ENCODE measurements at regions of chr12 and their contacts with region 1.

Region 1: DNA sequence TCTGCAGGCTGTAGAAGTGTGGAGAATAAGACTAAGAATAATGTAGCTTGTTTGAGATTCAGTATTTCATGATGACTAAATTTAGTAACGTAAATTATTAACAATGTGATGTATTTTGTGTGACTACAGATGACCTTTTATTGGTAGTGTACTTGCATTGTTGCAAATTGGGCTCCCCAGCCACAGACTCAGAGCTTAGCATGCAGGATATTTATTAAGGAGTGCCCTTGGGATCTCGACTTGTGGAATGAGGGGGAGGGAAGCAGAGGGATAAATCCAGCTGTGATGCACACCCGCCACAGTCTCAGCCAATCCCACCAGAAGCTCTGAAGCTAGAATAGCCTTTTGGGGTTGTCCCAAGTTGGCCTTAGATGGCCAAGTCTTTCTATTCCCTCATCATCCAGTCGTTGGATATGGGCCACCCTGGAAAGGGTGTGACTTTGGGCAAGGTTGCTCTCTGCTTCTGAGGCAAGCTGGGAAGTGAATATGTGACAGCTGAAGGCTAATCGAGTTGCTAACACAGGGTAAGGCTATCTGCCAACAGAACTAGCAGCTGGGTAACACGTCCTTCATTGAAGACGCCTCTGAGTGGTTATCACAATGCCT is 42.1 kb upstream of the USP44 start:
- DNase-seq: no peak
- H3K4me3 ChIP-seq: no peak overlapping the region
- H3K4me3 Mint-ChIP-seq: no peak overlapping the region
- H3K27ac Mint-ChIP-seq: no peak overlapping the region
- H3K4me1 ChIP-seq: no peaks in the 10 kb centered on the region
- H3K4me1 Mint-ChIP-seq: no peaks in the 10 kb centered on the region
- H3K27me3 ChIP-seq: no peaks in the 10 kb centered on the region
- H3K27me3 Mint-ChIP-seq: no peaks in the 10 kb centered on the region
- CTCF ChIP-seq: no peak

Region 2: DNA sequence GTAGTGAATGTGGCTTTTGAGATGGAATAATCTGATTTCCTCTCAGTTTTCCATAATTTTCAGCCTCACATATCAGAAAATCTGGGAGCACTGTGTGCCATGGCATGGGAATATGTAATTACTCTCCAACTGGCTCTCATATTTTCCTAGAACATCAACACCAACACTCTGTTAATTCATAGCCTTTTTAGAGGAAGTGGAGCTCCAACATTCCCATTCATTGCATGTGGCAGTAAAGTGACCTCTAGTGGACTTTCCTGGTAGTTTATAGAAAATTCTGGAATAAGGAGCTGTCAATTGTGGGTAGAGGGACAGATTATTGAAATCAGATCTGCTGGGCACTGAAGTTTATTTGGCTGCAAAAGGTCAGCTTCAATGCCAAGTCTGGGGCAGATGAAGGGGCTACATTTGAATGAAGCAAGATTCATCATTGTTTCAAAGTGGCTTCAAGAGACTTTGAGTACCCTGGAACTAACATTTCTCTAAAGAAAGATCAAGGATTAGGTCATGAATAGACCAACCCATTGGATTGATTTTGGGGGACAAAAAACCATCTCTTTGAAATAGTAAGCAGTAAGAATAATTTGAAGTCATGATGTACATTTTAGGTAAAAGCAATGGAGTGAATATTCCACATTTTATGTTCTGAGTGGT is 18.4 kb before region 1 on chr12:
- CTCF ChIA-PET with region 1: no interaction called
- POLR2A ChIA-PET with region 1: no interaction called
- intact Hi-C with region 1: no loop called
- DNase-seq: peak in 1 of 2 experiments; percentile 50
- H3K4me3 ChIP-seq: no peak overlapping the region
- H3K4me3 Mint-ChIP-seq: no peak overlapping the region
- H3K27ac Mint-ChIP-seq: no peak overlapping the region
- H3K4me1 ChIP-seq: no peaks in the 10 kb centered on the region
- H3K4me1 Mint-ChIP-seq: no peaks in the 10 kb centered on the region
- H3K27me3 ChIP-seq: no peaks in the 10 kb centered on the region
- H3K27me3 Mint-ChIP-seq: no peaks in the 10 kb centered on the region
- CTCF ChIP-seq: peak; percentile 57 to 73

Region 3: GRCh38 chr12:97398542-97399103 is 1805.3 kb after region 1 on chr12:
- CTCF ChIA-PET with region 1: no interaction called
- POLR2A ChIA-PET with region 1: interaction called, 10 read pairs
- intact Hi-C with region 1: no loop called
- DNase-seq: no peak
- H3K4me3 ChIP-seq: no peak overlapping the region
- H3K4me3 Mint-ChIP-seq: no peak overlapping the region
- H3K27ac Mint-ChIP-seq: no peak overlapping the region
- H3K4me1 ChIP-seq: 0 out of 2 replicates have a peak, but pooled peaks cover 7% of the 10 kb centered on the region
- H3K4me1 Mint-ChIP-seq: peaks cover 6% of the 10 kb centered on the region
- H3K27me3 ChIP-seq: no peaks in the 10 kb centered on the region
- H3K27me3 Mint-ChIP-seq: no peaks in the 10 kb centered on the region
- CTCF ChIP-seq: no peak